T-cell (primary cell): ENCODE measurements at regions of chr4 and their contacts with region 1.

Region 1: GRCh38 chr4:38055566-38055965 is 95.4 kb downstream of the PTTG2 start:
- DNase-seq: no peak
- ATAC-seq: no peak
- H3K4me3 ChIP-seq: no peak overlapping the region
- H3K4me3 Mint-ChIP-seq: no peak overlapping the region
- H3K27ac ChIP-seq: no peak overlapping the region
- H3K27ac Mint-ChIP-seq: no peak overlapping the region
- H3K4me1 ChIP-seq: no peaks in the 10 kb centered on the region
- H3K4me1 Mint-ChIP-seq: no peaks in the 10 kb centered on the region
- H3K27me3 ChIP-seq: no peaks in the 10 kb centered on the region
- H3K27me3 Mint-ChIP-seq: no peaks in the 10 kb centered on the region

Region 2: GRCh38 chr4:37591349-37591748 is 464.2 kb before region 1 on chr4:
- CTCF ChIA-PET with region 1: no interaction called
- POLR2A ChIA-PET with region 1: interaction called in 1 of 2 experiments, 13 read pairs
- DNase-seq: no peak
- ATAC-seq: no peak
- H3K4me3 ChIP-seq: no peak overlapping the region
- H3K4me3 Mint-ChIP-seq: no peak overlapping the region
- H3K27ac ChIP-seq: no peak overlapping the region
- H3K27ac Mint-ChIP-seq: no peak overlapping the region
- H3K4me1 ChIP-seq: no peaks in the 10 kb centered on the region
- H3K4me1 Mint-ChIP-seq: no peaks in the 10 kb centered on the region
- H3K27me3 ChIP-seq: no peaks in the 10 kb centered on the region
- H3K27me3 Mint-ChIP-seq: no peaks in the 10 kb centered on the region

Region 3: GRCh38 chr4:38030023-38030422 is 25.5 kb before region 1 on chr4:
- CTCF ChIA-PET with region 1: no interaction called
- POLR2A ChIA-PET with region 1: no interaction called
- DNase-seq: no peak
- ATAC-seq: no peak
- H3K4me3 ChIP-seq: no peak overlapping the region
- H3K4me3 Mint-ChIP-seq: no peak overlapping the region
- H3K27ac ChIP-seq: no peak overlapping the region
- H3K27ac Mint-ChIP-seq: no peak overlapping the region
- H3K4me1 ChIP-seq: no peaks in the 10 kb centered on the region
- H3K4me1 Mint-ChIP-seq: no peaks in the 10 kb centered on the region
- H3K27me3 ChIP-seq: no peaks in the 10 kb centered on the region
- H3K27me3 Mint-ChIP-seq: no peaks in the 10 kb centered on the region

Region 4: DNA sequence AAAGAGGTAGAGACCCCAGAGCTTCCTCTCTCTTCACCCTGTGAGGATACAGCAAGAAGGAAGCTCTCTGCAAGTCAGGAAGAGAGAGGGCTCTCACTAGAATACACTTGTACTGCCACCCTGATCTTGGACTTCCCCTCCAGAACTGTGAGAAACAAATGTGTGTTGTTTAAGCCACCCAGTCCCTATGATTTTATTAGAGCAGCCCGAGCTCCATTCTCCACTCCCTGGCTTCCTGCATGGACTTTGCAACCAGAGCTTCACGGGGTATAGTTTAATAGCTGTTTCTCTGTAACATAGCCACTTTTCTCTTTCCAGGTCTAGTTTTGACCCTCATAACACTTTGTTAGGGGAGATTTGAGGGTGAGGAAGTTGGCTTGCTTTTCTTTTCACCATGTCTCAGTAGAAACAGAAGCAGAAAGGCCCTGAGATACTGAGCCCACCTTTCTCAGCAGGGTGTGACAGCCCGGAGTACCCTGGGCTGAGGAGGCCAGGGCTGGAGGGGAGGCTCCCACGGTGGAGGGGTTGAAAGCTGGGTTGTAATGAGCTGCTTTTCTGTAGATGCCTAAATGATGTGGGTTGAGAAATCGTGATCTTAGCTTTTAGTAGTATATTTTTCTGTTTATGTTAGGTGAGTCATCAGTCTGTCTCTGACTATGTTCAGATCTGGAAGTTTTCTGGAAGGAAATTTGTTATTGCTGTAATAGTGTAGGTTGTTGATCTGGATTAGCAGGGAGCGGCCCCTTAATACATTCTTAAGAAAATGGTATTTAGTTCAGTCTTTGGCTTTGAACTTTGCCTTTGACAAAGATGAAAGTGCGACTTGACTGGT is 23.2 kb after region 1 on chr4:
- CTCF ChIA-PET with region 1: no interaction called
- POLR2A ChIA-PET with region 1: no interaction called
- DNase-seq: no peak
- ATAC-seq: no peak
- H3K4me3 ChIP-seq: no peak overlapping the region
- H3K4me3 Mint-ChIP-seq: no peak overlapping the region
- H3K27ac ChIP-seq: no peak overlapping the region
- H3K27ac Mint-ChIP-seq: no peak overlapping the region
- H3K4me1 ChIP-seq: no peaks in the 10 kb centered on the region
- H3K4me1 Mint-ChIP-seq: peaks cover 2 to 12% (median 11%) of the 10 kb centered on the region in 3 donors
- H3K27me3 ChIP-seq: no peaks in the 10 kb centered on the region
- H3K27me3 Mint-ChIP-seq: no peaks in the 10 kb centered on the region